Activated T-helper 1 cell treated with anti-CD3 and anti-CD28 coated beads, Interleukin-12 subunit alpha, Interleukin-12 subunit beta, Interleukin-2, Interleukin-4 antibody, amounts not matched to agents 30 ng/mL and 10 ng/mL and 1 ng/mL, durations not matched to agents 14 hours and 24 hours and 36 hours (primary cell): ENCODE measurements at regions of chr6 and their contacts with region 1.

Region 1: DNA sequence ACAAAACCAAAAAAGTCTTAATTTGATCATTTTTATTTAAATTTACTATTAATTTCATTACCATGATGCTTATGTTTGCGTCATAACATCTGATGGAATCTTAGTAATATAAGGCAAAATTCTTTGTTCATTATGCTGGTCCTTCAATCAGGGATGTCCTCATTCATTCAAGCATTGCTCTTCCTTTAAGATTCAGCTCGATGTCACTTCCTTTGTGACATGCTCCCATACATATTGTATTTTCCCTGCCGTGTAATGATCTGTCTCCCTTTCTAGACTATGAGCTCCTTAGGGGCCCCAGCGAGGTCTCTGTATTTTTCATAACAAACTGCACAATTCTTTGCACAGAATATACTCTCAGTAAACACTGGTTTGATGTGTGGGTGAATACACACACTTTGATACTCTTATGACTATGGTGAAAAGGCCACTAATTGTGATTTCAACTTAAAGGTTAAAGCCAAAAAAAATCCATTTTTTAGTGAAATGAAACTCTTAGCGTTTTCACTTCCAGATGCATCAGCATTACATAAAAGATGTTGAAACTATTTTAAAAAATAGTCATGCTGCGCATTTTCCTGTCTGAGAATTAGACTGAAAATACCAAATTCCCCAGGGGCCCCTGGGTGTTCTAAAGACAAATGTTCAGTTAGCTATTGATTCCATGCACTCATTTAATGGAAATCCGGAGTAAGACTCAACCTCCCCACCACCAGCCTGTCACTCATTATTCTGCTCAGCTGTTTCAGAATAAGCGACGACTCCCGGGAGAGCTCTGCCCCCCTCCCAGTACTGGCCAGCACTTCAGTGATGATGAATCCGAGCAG is 169.7 kb downstream of the ATXN1 start:
- DNase-seq: no peak
- H3K4me3 Mint-ChIP-seq: no peak overlapping the region
- H3K27ac Mint-ChIP-seq: peak overlapping the region; percentile 87
- H3K4me1 Mint-ChIP-seq: peaks cover 38% of the 10 kb centered on the region
- H3K27me3 Mint-ChIP-seq: no peaks in the 10 kb centered on the region

Region 2: DNA sequence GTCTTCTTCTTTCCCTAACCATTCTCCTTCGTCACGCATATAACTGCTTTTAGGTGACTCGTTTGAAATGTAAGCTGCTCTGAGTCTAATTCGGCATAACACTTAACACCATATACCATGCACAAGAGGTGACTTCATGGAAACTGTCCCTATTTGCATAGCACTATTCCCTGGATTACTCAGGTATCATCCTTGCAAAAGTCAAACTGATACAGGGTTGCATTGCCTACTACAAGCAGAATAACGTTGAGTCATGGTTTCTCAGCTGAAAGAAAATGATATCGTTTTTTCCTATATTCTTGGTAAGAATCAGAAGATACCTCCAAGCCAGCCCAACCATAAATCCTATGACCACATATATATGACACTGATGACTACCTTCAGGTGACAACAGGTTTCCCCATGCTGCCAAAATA is 57.9 kb before region 1 on chr6:
- intact Hi-C with region 1: loop called (anchors 1 kb)
- DNase-seq: no peak
- H3K4me3 Mint-ChIP-seq: no peak overlapping the region
- H3K27ac Mint-ChIP-seq: peak overlapping the region; percentile 83
- H3K4me1 Mint-ChIP-seq: peaks cover 45% of the 10 kb centered on the region
- H3K27me3 Mint-ChIP-seq: no peaks in the 10 kb centered on the region

Region 3: DNA sequence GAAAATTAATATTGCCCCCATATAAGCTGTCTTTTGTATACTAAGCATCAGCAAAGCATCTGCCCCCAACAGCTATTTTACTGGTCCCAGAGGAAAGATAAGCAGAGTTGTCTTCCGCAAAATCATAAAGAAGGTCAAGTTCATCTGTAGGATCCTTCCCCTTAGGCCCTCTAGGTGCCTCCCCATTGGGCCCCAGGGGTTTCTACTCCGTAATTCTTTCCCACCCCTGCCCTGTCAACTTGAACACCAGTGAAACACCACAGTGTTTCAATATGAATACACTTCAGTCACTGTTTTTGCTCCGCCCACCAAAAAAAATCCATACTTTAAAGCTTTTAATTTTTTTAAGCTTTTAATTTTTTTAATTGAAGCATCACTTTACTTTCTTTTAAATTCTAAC is 10.4 kb after region 1 on chr6:
- intact Hi-C with region 1: loop called (anchors 1 kb)
- DNase-seq: no peak
- H3K4me3 Mint-ChIP-seq: peak overlapping the region; percentile 28
- H3K27ac Mint-ChIP-seq: peak overlapping the region; percentile 75
- H3K4me1 Mint-ChIP-seq: peaks cover 49% of the 10 kb centered on the region
- H3K27me3 Mint-ChIP-seq: no peaks in the 10 kb centered on the region

Region 4: GRCh38 chr6:16670183-16670582 is 78.6 kb after region 1 on chr6:
- intact Hi-C with region 1: loop called (anchors 1 kb)
- DNase-seq: no peak
- H3K4me3 Mint-ChIP-seq: peak overlapping the region; percentile 51
- H3K27ac Mint-ChIP-seq: peak overlapping the region; percentile 94
- H3K4me1 Mint-ChIP-seq: peaks cover 84% of the 10 kb centered on the region
- H3K27me3 Mint-ChIP-seq: no peaks in the 10 kb centered on the region

Region 5: GRCh38 chr6:16956361-16956760 is 364.8 kb after region 1 on chr6:
- intact Hi-C with region 1: loop called (anchors 10 kb)
- DNase-seq: no peak
- H3K4me3 Mint-ChIP-seq: no peak overlapping the region
- H3K27ac Mint-ChIP-seq: peak overlapping the region; percentile 59
- H3K4me1 Mint-ChIP-seq: peaks cover 14% of the 10 kb centered on the region
- H3K27me3 Mint-ChIP-seq: peaks cover 3% of the 10 kb centered on the region